Activated naive CD4-positive, alpha-beta T cell treated with anti-CD3 and anti-CD28 coated beads for 36 hours (primary cell): ENCODE measurements at regions of chr5 and their contacts with region 1.

Region 1: GRCh38 chr5:40502736-40503135 is 177.0 kb upstream of the PTGER4 start:
- DNase-seq: no peak
- H3K4me3 Mint-ChIP-seq: no peak overlapping the region
- H3K27ac Mint-ChIP-seq: no peak overlapping the region
- H3K4me1 Mint-ChIP-seq: peaks cover 24% of the 10 kb centered on the region
- H3K27me3 Mint-ChIP-seq: no peaks in the 10 kb centered on the region

Region 2: DNA sequence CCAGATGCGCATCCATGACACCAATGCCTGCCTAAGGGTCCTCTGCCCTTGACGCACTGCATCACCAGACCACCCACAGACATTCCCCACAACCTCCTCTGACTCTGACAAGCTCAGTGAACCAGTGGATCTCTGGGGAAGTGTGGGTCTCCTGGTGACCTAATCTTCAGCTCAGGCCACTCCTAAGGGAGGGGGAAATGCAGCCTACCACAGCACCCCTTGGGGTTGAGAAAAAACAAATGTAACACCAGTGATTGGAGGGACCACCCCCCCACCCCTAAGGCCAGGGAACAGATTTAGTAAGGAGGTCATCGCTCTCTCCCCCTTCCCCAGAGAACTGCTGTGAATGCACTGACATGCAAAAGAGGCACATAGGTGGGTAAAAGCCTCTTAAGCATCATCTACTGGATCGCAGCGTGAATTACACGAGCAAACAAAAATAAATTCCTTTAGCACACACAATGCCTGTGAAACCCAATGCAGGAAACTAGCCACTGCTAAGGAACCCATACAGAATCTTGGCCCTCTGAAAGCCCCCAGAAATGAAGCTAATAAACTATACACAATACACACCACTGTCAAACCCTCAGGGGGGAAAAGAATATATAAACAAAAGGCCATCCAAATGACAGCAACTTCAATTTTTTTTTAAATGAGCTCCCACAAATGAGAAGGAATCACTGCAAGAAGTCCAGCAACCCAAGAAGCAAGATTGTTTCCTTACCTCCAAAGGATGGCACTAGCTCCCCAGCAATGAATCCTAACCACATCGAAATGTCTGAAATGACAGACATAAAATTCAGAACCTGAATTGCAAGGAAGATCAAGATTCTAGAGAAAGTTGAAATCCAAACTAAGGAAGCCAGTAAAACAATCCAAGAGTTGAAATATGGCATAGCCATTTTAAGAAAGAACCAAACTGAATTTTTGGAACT is 336.7 kb before region 1 on chr5:
- CTCF ChIA-PET with region 1: no interaction called
- intact Hi-C with region 1: loop called (anchors 2 kb)
- DNase-seq: peak; percentile 61
- H3K4me3 Mint-ChIP-seq: no peak overlapping the region
- H3K27ac Mint-ChIP-seq: peak overlapping the region; percentile 14
- H3K4me1 Mint-ChIP-seq: peaks cover 9% of the 10 kb centered on the region
- H3K27me3 Mint-ChIP-seq: no peaks in the 10 kb centered on the region

Region 3: GRCh38 chr5:40551496-40552491 is 49.1 kb after region 1 on chr5:
- CTCF ChIA-PET with region 1: no interaction called
- intact Hi-C with region 1: no loop called
- DNase-seq: no peak
- H3K4me3 Mint-ChIP-seq: no peak overlapping the region
- H3K27ac Mint-ChIP-seq: no peak overlapping the region
- H3K4me1 Mint-ChIP-seq: peaks cover 17% of the 10 kb centered on the region
- H3K27me3 Mint-ChIP-seq: no peaks in the 10 kb centered on the region

Region 4: GRCh38 chr5:40716000-40716399 is 213.3 kb after region 1 on chr5:
- CTCF ChIA-PET with region 1: no interaction called
- intact Hi-C with region 1: loop called (anchors 1 kb)
- DNase-seq: no peak
- H3K4me3 Mint-ChIP-seq: no peak overlapping the region
- H3K27ac Mint-ChIP-seq: no peak overlapping the region
- H3K4me1 Mint-ChIP-seq: peaks cover 13% of the 10 kb centered on the region
- H3K27me3 Mint-ChIP-seq: no peaks in the 10 kb centered on the region